Spleen (tissue), 13 donors: ENCODE measurements at regions of chr15 and their contacts with region 1.

Region 1: DNA sequence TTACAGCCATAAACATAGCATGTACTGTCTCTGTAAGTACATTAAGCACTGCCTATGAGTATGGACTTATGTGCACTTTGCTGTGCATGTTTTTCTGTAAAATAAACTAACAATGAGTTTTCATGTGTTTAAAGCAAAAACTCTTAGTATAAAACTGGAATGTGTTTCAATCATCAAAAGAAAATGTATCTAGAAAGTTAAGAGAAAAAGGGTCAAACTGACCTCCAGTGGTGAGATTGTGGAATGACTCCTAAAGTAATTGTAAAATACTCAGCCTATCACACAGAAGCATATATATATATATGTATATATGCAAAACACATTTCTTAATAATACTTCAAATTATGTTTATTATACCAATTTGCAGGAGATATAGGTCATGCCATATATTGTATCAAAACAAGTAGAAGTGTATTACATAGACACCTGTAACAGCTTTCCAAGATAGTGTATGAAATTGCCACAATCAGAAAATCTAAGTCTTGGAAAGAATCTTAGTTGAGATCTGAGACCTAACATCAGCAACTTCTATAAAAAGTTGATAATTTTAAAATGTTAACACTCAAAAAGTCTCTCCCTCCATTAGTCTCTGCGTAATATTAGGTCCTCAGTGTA is 199.6 kb downstream of the FMN1 start:
- DNase-seq: no peak
- H3K4me3 ChIP-seq: no peak overlapping the region
- H3K27ac ChIP-seq: no peak overlapping the region
- H3K4me1 ChIP-seq: no peaks in the 10 kb centered on the region
- H3K27me3 ChIP-seq: peaks cover 0 to 3% (median 0%) of the 10 kb centered on the region in 7 donors
- CTCF ChIP-seq: peak in 8 of 11 experiments; percentile 11 to 62 (median 46)
- POLR2A ChIP-seq: no peak

Region 2: GRCh38 chr15:32659340-32660155 is 335.4 kb before region 1 on chr15:
- intact Hi-C with region 1: loop called (anchors 5 kb)
- DNase-seq: no peak
- H3K4me3 ChIP-seq: no peak overlapping the region
- H3K27ac ChIP-seq: no peak overlapping the region
- H3K4me1 ChIP-seq: no peaks in the 10 kb centered on the region
- H3K27me3 ChIP-seq: no peaks in the 10 kb centered on the region
- CTCF ChIP-seq: no peak
- POLR2A ChIP-seq: no peak

Region 3: GRCh38 chr15:32834156-32834555 is 160.8 kb before region 1 on chr15:
- intact Hi-C with region 1: no loop called
- DNase-seq: no peak
- H3K4me3 ChIP-seq: no peak overlapping the region
- H3K27ac ChIP-seq: no peak overlapping the region
- H3K4me1 ChIP-seq: peaks cover 0 to 7% (median 0%) of the 10 kb centered on the region in 6 donors
- H3K27me3 ChIP-seq: peaks cover 0 to 16% (median 0%) of the 10 kb centered on the region in 7 donors
- CTCF ChIP-seq: no peak
- POLR2A ChIP-seq: no peak

Region 4: DNA sequence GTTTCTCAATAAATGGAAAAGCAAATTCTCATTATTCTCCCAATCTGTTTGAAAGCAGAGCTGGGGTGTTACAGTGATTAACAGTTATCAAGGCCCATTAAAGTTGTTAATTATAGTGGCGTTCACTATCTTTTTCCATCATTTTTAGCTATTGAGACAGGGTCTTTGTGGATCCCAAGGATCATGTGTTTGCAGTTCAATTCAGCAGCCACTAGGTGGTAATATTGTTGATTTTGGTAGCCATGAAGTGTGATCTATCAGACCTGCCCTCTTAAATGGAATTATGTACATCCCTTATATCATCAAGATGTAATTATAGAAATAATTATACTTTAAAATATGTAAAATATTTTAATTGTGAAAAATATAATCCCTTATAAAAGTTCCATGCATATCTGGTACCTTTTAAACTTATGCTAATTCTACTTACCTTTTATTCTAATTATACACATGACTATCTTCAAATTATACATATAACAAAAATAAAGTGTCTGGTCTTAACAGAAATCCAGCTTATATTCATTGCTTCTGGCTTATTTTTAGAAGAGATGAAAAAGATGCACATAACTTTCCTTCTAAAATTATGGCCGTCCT is 150.7 kb before region 1 on chr15:
- intact Hi-C with region 1: loop called (anchors 5 kb)
- DNase-seq: no peak
- H3K4me3 ChIP-seq: no peak overlapping the region
- H3K27ac ChIP-seq: no peak overlapping the region
- H3K4me1 ChIP-seq: no peaks in the 10 kb centered on the region
- H3K27me3 ChIP-seq: no peaks in the 10 kb centered on the region
- CTCF ChIP-seq: peak in 10 of 11 experiments; percentile 36 to 72 (median 64)
- POLR2A ChIP-seq: no peak